ENCODE measurements at regions of chr10 and their contacts with region 1.

Region 1: DNA sequence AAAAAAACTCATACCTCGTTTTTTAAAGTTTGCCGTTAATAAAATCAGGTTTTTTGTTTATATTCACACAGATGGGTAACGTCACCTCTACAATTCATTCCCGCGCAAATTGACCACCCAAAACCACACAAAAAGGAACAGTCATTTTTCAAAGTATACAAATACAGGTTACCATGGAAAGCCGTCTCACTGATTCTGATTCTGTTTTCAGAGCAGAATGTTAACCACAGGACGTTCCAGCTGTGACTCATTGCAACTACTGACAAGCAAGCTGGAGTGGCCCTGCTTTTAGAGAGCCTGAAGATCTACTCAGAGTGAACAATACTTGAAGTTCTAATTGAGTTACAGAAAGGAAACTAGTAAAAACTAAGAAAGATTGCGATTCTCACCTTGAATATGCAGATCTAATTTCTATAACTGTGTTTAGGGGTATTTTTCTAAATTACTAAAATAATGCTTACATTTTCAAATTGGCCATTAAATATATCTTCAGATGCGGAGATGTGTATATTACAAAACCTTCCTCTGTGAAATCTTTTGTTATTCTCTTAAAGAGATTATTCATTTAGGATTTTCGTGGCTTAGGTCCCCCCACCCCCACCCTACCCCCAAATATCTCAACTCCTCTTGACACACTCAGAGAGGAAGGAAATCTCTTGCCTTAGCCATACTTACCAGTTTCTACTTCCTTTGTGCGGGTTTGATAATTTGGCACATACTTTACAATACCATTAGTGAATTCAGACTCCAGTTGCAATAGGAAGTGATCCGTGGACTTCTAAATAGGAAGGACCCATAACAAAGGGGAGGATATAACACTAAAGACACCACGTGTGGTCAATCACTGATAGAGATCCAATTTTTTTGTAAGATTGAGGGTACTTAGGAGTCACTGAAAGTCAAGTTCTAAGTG is 106.0 kb downstream of the CUBN start:
- DNase-seq: no peak
- ATAC-seq: peak; percentile 89
- H3K4me3 ChIP-seq: 0 out of 4 replicates have a peak overlapping the region, but pooled peaks of 1 of the 2 experiments have one; percentile 0
- H3K27ac ChIP-seq: peak overlapping the region; percentile 99
- H3K4me1 ChIP-seq: peaks cover 67% of the 10 kb centered on the region
- H3K27me3 ChIP-seq: no peaks in the 10 kb centered on the region
- CTCF ChIP-seq: no peak

Region 2: GRCh38 chr10:16965740-16966447 is 57.7 kb before region 1 on chr10:
- CTCF ChIA-PET with region 1: no interaction called
- POLR2A ChIA-PET with region 1: interaction called, 3 read pairs
- in situ Hi-C with region 1: no loop called
- intact Hi-C with region 1: loop called (anchors 10 kb)
- DNase-seq: peak; percentile 84
- ATAC-seq: peak; percentile 91
- H3K4me3 ChIP-seq: peak overlapping the region in 1 of 2 experiments; percentile 5; a peak in 1 of 4 replicates
- H3K27ac ChIP-seq: peak overlapping the region; percentile 99
- H3K4me1 ChIP-seq: peaks cover 43% of the 10 kb centered on the region
- H3K27me3 ChIP-seq: no peaks in the 10 kb centered on the region
- CTCF ChIP-seq: no peak

Region 3: DNA sequence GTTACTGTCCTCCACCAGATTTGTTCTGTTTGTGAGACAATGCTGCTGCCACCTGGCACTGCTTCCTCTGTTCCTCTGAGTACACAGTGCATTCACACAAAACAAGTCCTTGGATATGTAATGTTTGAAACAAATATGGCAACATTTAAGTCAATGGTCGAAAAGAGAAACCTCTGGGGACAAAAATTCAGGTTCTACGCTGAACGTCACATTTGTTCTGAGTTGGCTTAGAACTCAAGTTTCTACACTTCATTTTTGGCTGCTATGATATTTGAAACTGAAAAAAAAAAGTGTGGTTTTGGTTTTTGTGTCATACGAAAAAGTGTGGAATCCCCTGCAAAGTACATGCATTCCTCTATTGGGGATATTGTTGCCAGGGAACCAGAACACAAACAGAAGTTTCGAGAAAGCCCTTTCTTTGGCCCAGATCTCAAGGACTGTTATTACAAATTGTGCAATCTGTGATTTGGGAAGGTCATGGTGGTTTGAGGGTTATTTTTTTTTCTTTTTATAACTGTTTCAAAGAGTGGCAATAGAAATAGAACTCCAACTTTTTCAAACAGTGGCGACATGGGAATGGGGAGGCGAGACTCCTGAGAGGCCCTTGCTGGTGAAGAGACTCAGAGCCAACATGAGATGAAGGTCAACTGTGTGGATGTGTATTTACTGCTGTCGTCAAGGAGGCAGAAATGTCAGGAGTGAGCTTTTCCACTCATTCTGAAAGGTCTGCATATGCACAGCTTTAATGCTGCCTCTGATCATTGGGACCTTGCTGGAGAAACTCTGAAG is 21.5 kb before region 1 on chr10:
- CTCF ChIA-PET with region 1: no interaction called
- POLR2A ChIA-PET with region 1: no interaction called
- in situ Hi-C with region 1: no loop called
- intact Hi-C with region 1: no loop called
- DNase-seq: no peak
- ATAC-seq: no peak
- H3K4me3 ChIP-seq: no peak overlapping the region
- H3K27ac ChIP-seq: peak overlapping the region; percentile 78
- H3K4me1 ChIP-seq: no peaks in the 10 kb centered on the region; the same call in 1 of the 2 replicates
- H3K27me3 ChIP-seq: no peaks in the 10 kb centered on the region
- CTCF ChIP-seq: no peak

Region 4: GRCh38 chr10:17113889-17114540 is 90.4 kb after region 1 on chr10:
- CTCF ChIA-PET with region 1: no interaction called
- POLR2A ChIA-PET with region 1: interaction called, 25 read pairs
- in situ Hi-C with region 1: no loop called
- intact Hi-C with region 1: no loop called
- DNase-seq: no peak
- ATAC-seq: peak; percentile 53
- H3K4me3 ChIP-seq: no peak overlapping the region
- H3K27ac ChIP-seq: peak overlapping the region; percentile 99
- H3K4me1 ChIP-seq: peaks cover 39% of the 10 kb centered on the region
- H3K27me3 ChIP-seq: no peaks in the 10 kb centered on the region
- CTCF ChIP-seq: no peak

Region 5: DNA sequence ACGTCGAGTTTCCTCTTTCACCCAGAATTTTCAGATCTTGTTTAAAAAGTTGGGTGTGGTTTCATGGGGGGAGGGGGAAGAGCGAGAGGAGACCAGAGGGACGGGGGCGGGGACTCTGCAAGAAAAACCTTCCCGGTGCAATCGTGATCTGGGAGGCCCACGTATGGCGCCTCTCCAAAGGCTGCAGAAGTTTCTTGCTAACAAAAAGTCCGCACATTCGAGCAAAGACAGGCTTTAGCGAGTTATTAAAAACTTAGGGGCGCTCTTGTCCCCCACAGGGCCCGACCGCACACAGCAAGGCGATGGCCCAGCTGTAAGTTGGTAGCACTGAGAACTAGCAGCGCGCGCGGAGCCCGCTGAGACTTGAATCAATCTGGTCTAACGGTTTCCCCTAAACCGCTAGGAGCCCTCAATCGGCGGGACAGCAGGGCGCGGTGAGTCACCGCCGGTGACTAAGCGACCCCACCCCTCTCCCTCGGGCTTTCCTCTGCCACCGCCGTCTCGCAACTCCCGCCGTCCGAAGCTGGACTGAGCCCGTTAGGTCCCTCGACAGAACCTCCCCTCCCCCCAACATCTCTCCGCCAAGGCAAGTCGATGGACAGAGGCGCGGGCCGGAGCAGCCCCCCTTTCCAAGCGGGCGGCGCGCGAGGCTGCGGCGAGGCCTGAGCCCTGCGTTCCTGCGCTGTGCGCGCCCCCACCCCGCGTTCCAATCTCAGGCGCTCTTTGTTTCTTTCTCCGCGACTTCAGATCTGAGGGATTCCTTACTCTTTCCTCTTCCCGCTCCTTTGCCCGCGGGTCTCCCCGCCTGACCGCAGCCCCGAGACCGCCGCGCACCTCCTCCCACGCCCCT is 204.7 kb after region 1 on chr10 and contains the start of gene VIM:
- CTCF ChIA-PET with region 1: no interaction called
- POLR2A ChIA-PET with region 1: interaction called, 4 read pairs
- in situ Hi-C with region 1: no loop called
- intact Hi-C with region 1: loop called (anchors 10 kb)
- DNase-seq: no peak
- ATAC-seq: peak; percentile 75
- H3K4me3 ChIP-seq: peak within 1 kb of the TSS; percentile 64 to 88
- H3K27ac ChIP-seq: peak within 1 kb of the TSS; percentile 96
- H3K4me1 ChIP-seq: peaks cover 26% of the 10 kb centered on the region
- H3K27me3 ChIP-seq: no peaks in the 10 kb centered on the region
- CTCF ChIP-seq: no peak
- total RNA-seq, gene VIM: 3,436 TPM